Esophagus muscularis mucosa (tissue), 4 donors: ENCODE measurements at regions of chr3 and their contacts with region 1.

Region 1: GRCh38 chr3:112531358-112531781 is 30.4 kb downstream of the ATG3 start:
- DNase-seq: no peak
- H3K4me3 ChIP-seq: no peak overlapping the region
- H3K27ac ChIP-seq: no peak overlapping the region
- H3K4me1 ChIP-seq: no peaks in the 10 kb centered on the region
- H3K27me3 ChIP-seq: no peaks in the 10 kb centered on the region
- CTCF ChIP-seq: peak; percentile 46 to 56 (median 48)
- EP300 ChIP-seq: no peak
- POLR2A ChIP-seq: no peak

Region 2: DNA sequence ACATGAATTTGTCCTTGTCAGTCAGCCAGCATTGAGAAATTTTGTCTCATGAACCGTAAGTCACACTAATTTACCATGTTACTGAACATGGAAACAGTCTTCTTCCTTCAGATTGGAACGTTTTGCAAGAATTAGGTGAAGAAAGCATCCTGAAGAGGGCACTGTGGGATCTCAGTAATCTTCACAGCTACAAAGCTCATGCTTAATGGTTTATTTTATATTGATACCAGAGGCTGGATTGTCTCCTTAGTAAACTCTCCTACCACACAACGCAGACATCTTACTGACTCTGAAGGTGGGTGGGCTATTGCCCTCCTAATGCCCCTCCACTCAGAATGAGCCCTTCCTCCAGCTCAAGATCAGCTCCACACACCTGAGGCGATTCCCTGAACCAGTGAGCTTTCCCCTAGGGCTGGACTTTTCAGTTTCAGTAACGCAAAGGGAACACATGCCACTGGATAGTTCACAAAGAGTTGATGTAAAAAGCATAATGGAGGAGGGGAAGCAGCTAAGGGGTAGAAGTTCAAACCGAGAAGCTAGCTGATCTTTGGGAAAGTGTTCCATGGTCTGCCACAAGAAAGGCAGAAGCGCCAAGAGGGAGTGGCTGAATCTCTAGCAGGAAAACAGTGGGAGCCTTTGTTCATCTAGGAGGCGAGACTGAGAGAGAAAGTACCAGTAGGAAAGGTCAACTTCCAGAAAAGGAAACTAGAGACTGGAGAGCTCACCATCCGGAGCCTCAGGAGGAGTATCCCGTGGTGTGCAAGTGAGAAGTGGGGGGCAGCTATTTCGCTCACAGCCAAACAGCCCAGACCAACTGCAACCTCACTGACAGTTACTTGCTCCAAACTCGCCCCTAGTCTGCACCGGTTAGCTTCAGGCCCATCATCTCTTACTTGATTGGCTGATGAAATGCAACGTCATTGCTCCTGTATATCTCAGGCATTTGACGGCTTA is 237.7 kb before region 1 on chr3 and contains the start of gene SLC9C1:
- intact Hi-C with region 1: loop called (anchors 5 kb)
- DNase-seq: no peak
- H3K4me3 ChIP-seq: peak within 1 kb of the TSS; percentile 46 to 56 (median 54)
- H3K27ac ChIP-seq: peak within 1 kb of the TSS; percentile 63 to 77 (median 70)
- H3K4me1 ChIP-seq: peaks cover 0 to 8% (median 4%) of the 10 kb centered on the region in 4 donors
- H3K27me3 ChIP-seq: no peaks in the 10 kb centered on the region
- CTCF ChIP-seq: peak; percentile 50 to 65 (median 60)
- EP300 ChIP-seq: no peak
- POLR2A ChIP-seq: no peak
- total RNA-seq, gene SLC9C1: 0.17 TPM in 1 of 4 donors, not detected in the others